ENCODE measurements at regions of chr5 and their contacts with region 1.

Region 1: GRCh38 chr5:141822138-141822537 is 56.1 kb downstream of the PCDH1 start:
- DNase-seq: no peak
- ATAC-seq: peak; percentile 26

Region 2: GRCh38 chr5:141835928-141836670 is 14.0 kb after region 1 on chr5:
- intact Hi-C with region 1: loop called (anchors 2 kb)
- DNase-seq: no peak
- ATAC-seq: peak; percentile 68

Measured in Right ventricle myocardium inferior (tissue), 1 donor.